Activated CD4-positive, alpha-beta memory T cell treated with anti-CD3 and anti-CD28 coated beads for 36 hours (primary cell): ENCODE measurements at regions of chr5 and their contacts with region 1.

Region 1: GRCh38 chr5:39177631-39177964 is 41.8 kb downstream of the FYB1 start:
- DNase-seq: no peak
- H3K4me3 Mint-ChIP-seq: peak overlapping the region; percentile 63
- H3K27ac Mint-ChIP-seq: peak overlapping the region; percentile 88
- H3K4me1 Mint-ChIP-seq: peaks cover 97% of the 10 kb centered on the region
- H3K27me3 Mint-ChIP-seq: no peaks in the 10 kb centered on the region

Region 2: GRCh38 chr5:39132128-39132447 is 45.5 kb before region 1 on chr5:
- CTCF ChIA-PET with region 1: no interaction called
- POLR2A ChIA-PET with region 1: no interaction called
- intact Hi-C with region 1: no loop called
- DNase-seq: no peak
- H3K4me3 Mint-ChIP-seq: no peak overlapping the region
- H3K27ac Mint-ChIP-seq: no peak overlapping the region
- H3K4me1 Mint-ChIP-seq: peaks cover 54% of the 10 kb centered on the region
- H3K27me3 Mint-ChIP-seq: no peaks in the 10 kb centered on the region

Region 3: DNA sequence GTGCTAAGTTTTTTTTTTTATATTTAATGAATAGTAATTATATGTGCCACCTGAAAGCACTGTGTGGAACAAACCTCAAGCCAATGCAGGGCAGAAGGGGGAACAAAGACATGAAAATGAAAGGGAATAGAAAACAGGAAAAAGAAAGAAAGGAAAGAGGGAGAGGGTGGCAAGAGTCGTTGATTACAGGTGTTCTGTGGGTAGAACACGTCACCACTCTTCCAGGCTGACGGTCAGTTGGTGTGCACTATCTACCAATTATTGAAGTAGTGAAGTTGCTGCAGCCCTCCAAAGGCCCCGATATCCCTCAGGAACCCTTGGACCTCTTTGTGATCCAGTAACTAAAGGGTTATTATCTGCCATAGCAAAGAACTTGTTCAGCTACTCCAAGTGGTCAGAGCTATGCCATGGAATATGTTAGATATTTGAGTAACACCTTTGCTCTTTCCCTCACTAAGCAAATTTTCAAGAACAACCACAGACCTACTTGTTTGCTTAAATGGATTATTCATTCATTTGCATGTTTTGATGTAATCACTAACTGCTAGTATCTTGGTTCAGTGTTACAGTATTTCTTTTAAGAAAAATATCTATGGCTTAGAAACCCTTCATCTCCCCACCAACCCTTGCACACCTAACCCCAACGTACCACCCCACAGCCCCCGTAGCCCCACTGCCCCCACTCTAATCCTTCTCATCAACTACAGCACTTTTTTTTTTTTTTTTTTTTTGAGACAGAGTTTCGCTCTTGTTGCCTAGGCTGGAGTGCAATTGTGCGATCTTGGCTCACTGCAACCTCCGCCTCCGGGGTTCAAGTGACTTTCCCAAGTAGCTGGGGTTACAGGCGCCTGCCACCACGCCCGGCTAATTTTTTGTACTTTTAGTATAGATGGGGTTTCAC is 10.5 kb after region 1 on chr5:
- CTCF ChIA-PET with region 1: interaction called, 38 read pairs
- POLR2A ChIA-PET with region 1: interaction called, 14 read pairs
- intact Hi-C with region 1: loop called (anchors 1 kb)
- DNase-seq: no peak
- H3K4me3 Mint-ChIP-seq: peak overlapping the region; percentile 69
- H3K27ac Mint-ChIP-seq: peak overlapping the region; percentile 92
- H3K4me1 Mint-ChIP-seq: peaks cover 79% of the 10 kb centered on the region
- H3K27me3 Mint-ChIP-seq: no peaks in the 10 kb centered on the region

Region 4: DNA sequence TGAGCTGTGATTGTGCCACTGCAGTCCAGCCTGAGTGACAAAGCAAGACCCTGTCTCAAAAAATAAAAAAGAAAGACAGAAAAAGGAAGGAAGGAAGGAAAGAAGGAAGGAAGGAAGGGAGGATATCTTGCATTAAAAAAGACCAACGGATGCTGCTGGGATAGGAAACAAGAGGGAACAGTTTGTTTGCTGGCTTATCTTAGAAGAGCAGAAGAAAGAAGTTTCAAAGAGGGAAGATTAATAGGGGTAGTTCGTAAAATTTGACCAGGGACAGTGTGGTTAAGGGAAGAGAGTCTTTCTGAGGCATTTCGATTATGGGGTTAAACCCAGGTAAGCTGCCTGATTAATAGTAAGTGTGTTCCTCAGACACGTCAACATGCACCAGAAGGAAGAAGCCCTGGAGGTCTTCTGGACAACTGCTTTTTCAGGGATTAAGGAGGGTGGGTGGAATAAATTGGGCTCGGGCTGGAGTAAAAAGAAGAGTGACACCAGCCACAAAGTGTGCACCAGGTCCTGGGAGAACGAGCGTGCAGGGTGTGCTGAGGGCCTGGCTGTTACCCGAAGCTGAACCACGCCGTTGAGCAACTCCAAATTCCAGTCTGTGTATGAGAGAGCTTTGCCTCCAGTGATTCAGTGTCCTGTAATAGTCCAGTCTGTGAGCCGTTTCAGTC is 17.0 kb after region 1 on chr5:
- CTCF ChIA-PET with region 1: interaction called, 38 read pairs
- POLR2A ChIA-PET with region 1: interaction called, 50 read pairs
- intact Hi-C with region 1: no loop called
- DNase-seq: no peak
- H3K4me3 Mint-ChIP-seq: peak overlapping the region; percentile 75
- H3K27ac Mint-ChIP-seq: peak overlapping the region; percentile 91
- H3K4me1 Mint-ChIP-seq: peaks cover 66% of the 10 kb centered on the region
- H3K27me3 Mint-ChIP-seq: no peaks in the 10 kb centered on the region